ENCODE measurements at regions of chr11 and their contacts with region 1.

Region 1: GRCh38 chr11:128552783-128553661 is 34.3 kb downstream of the ETS1 start:
- H3K4me3 ChIP-seq: no peak overlapping the region
- H3K27ac ChIP-seq: no peak overlapping the region
- H3K4me1 ChIP-seq: no peaks in the 10 kb centered on the region
- CTCF ChIP-seq: no peak

Region 2: GRCh38 chr11:128290106-128290840 is 262.7 kb before region 1 on chr11:
- CTCF ChIA-PET with region 1: interaction called, 13 read pairs
- POLR2A ChIA-PET with region 1: no interaction called
- H3K4me3 ChIP-seq: no peak overlapping the region
- H3K27ac ChIP-seq: no peak overlapping the region; the same call in 1 of the 2 replicates
- H3K4me1 ChIP-seq: no peaks in the 10 kb centered on the region
- CTCF ChIP-seq: no peak

Region 3: GRCh38 chr11:128594226-128594625 is 41.2 kb after region 1 on chr11:
- CTCF ChIA-PET with region 1: no interaction called
- POLR2A ChIA-PET with region 1: no interaction called
- H3K4me3 ChIP-seq: no peak overlapping the region
- H3K27ac ChIP-seq: no peak overlapping the region; the same call in 1 of the 2 replicates
- H3K4me1 ChIP-seq: peaks cover 10% of the 10 kb centered on the region
- CTCF ChIP-seq: no peak

Measured in HEK293 (cell line).